Right ventricle myocardium inferior (tissue), 1 donor: ENCODE measurements at regions of chr10 and their contacts with region 1.

Region 1: DNA sequence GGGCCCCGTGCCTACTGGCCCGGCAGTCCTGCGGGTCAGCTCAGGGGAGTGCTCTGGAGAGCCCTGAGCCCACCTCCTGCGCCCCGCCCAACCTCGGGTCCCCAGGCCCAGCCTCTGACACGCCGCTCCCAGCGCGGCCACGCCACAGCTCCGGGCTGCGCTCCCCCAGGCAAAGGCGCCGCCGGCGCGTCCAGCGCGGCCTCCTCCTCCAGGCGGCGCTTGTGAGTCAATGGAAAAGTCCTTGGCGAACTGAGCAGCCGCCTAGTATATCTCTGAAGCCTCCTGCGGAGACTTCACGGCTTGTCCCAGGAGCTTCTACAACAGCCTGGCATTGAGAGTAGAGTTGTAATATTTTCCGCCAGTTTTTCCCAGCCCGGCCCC is 29.5 kb upstream of the BMS1 start:
- DNase-seq: peak; percentile 84
- ATAC-seq: peak; percentile 90

Region 2: GRCh38 chr10:42960491-42960990 is 207.4 kb after region 1 on chr10:
- intact Hi-C with region 1: no loop called
- DNase-seq: peak; percentile 50
- ATAC-seq: peak; percentile 70

Region 3: DNA sequence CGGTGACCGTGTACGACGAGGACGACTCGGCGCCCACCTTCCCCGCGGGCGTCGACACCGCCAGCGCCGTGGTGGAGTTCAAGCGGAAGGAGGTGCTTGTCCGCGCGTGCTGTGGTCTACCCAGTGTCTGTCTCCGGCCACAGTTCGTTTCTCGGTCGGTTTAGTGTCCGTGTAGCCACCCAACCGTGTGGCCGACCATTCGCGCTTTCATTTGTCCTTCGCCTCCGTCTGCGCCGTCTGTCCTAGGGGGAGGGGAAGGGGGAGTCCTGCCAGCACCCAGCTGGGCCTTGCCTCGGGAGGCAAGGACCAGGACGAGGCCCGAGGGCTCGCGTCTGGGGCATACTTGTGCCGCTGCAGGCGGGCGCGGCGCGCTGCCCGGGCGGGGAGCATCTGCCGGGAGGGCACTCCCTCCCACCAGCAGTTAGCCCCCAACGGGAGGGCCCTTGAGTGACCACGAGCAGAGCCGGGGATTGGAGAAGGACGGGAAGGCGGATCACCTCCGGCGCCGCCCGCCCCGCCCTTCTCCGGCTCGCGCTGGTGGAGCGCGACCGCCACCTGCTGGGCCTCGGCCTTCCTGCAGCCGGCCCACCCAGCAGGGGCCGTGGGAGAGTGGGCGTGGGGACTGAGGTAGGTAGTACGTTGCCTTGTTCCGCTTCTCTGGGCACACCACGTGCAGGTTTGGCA is 352.1 kb after region 1 on chr10:
- intact Hi-C with region 1: loop called (anchors 1 kb)
- DNase-seq: peak; percentile 93
- ATAC-seq: peak; percentile 96